ENCODE measurements at regions of chr3 and their contacts with region 1.

Region 1: GRCh38 chr3:45978006-45978761 is 17.4 kb downstream of the FYCO1 start:
- DNase-seq: peak; percentile 82
- ATAC-seq: peak; percentile 20
- H3K4me3 Mint-ChIP-seq: peak overlapping the region; percentile 22
- H3K27ac Mint-ChIP-seq: peak overlapping the region; percentile 91
- H3K4me1 Mint-ChIP-seq: peaks cover 71% of the 10 kb centered on the region
- H3K27me3 Mint-ChIP-seq: peaks cover 2% of the 10 kb centered on the region

Region 2: GRCh38 chr3:45950686-45951600 is 27.2 kb before region 1 on chr3:
- CTCF ChIA-PET with region 1: interaction called, 4 read pairs
- POLR2A ChIA-PET with region 1: no interaction called
- intact Hi-C with region 1: loop called in 1 of 2 experiments (anchors 2 kb)
- DNase-seq: peak; percentile 83
- ATAC-seq: peak; percentile 85
- H3K4me3 Mint-ChIP-seq: no peak overlapping the region
- H3K27ac Mint-ChIP-seq: peak overlapping the region; percentile 22
- H3K4me1 Mint-ChIP-seq: peaks cover 45% of the 10 kb centered on the region
- H3K27me3 Mint-ChIP-seq: peaks cover 3% of the 10 kb centered on the region

Region 3: GRCh38 chr3:45962033-45962432 is 16.2 kb before region 1 on chr3:
- CTCF ChIA-PET with region 1: interaction called, 4 read pairs
- POLR2A ChIA-PET with region 1: interaction called, 6 read pairs
- intact Hi-C with region 1: loop called in 1 of 2 experiments (anchors 2 kb)
- DNase-seq: peak; percentile 61
- ATAC-seq: peak; percentile 60
- H3K4me3 Mint-ChIP-seq: no peak overlapping the region
- H3K27ac Mint-ChIP-seq: no peak overlapping the region
- H3K4me1 Mint-ChIP-seq: peaks cover 43% of the 10 kb centered on the region
- H3K27me3 Mint-ChIP-seq: peaks cover 3% of the 10 kb centered on the region

Region 4: GRCh38 chr3:45995236-45996192 is 17.3 kb after region 1 on chr3 and contains the start of gene FYCO1:
- CTCF ChIA-PET with region 1: interaction called, 5 read pairs
- POLR2A ChIA-PET with region 1: interaction called, 4 read pairs
- intact Hi-C with region 1: loop called in 1 of 2 experiments (anchors 2 kb)
- DNase-seq: peak; percentile 94
- ATAC-seq: peak; percentile 89
- H3K4me3 Mint-ChIP-seq: peak within 1 kb of the TSS; percentile 80
- H3K27ac Mint-ChIP-seq: peak within 1 kb of the TSS; percentile 93
- H3K4me1 Mint-ChIP-seq: peaks cover 43% of the 10 kb centered on the region
- H3K27me3 Mint-ChIP-seq: no peaks in the 10 kb centered on the region
- total RNA-seq, gene FYCO1: 8.2 to 10.6 TPM

Region 5: GRCh38 chr3:46538803-46539442 is 560.7 kb after region 1 on chr3:
- CTCF ChIA-PET with region 1: no interaction called
- POLR2A ChIA-PET with region 1: no interaction called
- intact Hi-C with region 1: loop called in 1 of 2 experiments (anchors 5 kb)
- DNase-seq: peak; percentile 86
- ATAC-seq: peak; percentile 89
- H3K4me3 Mint-ChIP-seq: peak overlapping the region; percentile 54
- H3K27ac Mint-ChIP-seq: peak overlapping the region; percentile 83
- H3K4me1 Mint-ChIP-seq: peaks cover 60% of the 10 kb centered on the region
- H3K27me3 Mint-ChIP-seq: no peaks in the 10 kb centered on the region

Region 6: GRCh38 chr3:46909535-46910442 is 931.6 kb after region 1 on chr3:
- CTCF ChIA-PET with region 1: no interaction called
- POLR2A ChIA-PET with region 1: no interaction called
- intact Hi-C with region 1: no loop called
- DNase-seq: peak; percentile 91
- ATAC-seq: peak; percentile 96
- H3K4me3 Mint-ChIP-seq: no peak overlapping the region
- H3K27ac Mint-ChIP-seq: no peak overlapping the region
- H3K4me1 Mint-ChIP-seq: peaks cover 18% of the 10 kb centered on the region
- H3K27me3 Mint-ChIP-seq: no peaks in the 10 kb centered on the region